AG04449 (cell line): ENCODE measurements at regions of chr4 and their contacts with region 1.

Region 1: GRCh38 chr4:42865572-42866189 is 26.8 kb upstream of the GRXCR1 start:
- DNase-seq: peak; percentile 2
- H3K4me3 ChIP-seq: no peak overlapping the region
- CTCF ChIP-seq: peak; percentile 55

Region 2: DNA sequence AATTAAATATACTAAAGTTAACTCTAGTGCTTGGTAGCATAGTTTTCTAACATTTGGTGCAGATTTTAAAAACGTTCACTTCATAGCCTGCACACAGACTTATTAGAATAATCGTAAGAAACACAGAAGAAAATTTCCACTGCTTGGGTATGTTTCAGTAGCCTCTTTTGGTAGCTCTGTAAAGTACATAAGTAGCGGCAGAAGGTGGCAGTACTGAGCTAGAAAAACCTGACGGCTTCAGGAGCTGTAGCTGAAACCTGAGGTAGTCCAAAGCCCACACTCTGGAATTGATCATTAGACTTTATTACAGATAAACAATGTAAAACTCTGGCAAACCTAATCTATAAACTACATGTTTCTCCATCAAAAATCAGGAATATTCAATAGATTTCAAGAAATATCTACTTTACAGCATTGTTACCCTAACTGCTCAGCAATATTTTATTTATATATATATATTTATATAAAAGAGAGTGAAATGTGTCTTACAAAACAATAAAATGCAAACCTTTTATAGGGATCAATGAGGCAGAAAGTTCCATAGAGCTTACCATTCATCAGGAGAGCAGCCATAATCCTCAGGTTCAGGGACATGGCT is 297.0 kb before region 1 on chr4:
- CTCF ChIA-PET with region 1: interaction called, 42 read pairs
- POLR2A ChIA-PET with region 1: no interaction called
- DNase-seq: peak; percentile 12
- H3K4me3 ChIP-seq: no peak overlapping the region
- CTCF ChIP-seq: peak; percentile 63

Region 3: GRCh38 chr4:42750091-42750490 is 115.6 kb before region 1 on chr4:
- CTCF ChIA-PET with region 1: no interaction called
- POLR2A ChIA-PET with region 1: no interaction called
- DNase-seq: no peak
- H3K4me3 ChIP-seq: no peak overlapping the region
- CTCF ChIP-seq: no peak

Region 4: DNA sequence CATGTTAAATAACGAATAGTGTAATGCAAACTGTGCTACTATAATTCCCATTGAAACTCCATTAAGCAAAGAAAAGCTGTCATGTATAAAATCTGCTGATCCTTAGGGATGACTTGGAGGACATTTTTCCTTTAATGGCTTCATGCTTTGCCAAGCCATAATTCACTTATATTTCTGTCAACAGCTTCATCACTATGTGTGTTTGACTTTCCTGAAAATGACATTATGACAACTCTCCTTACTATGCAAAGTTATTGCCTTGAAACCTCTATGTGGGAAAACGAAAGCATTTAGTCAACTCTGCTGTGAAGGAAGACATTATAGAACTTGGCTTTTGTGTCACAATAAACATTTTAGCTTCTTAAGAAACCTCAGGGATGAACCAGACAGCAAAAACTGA is 237.4 kb after region 1 on chr4:
- CTCF ChIA-PET with region 1: no interaction called
- POLR2A ChIA-PET with region 1: no interaction called
- DNase-seq: no peak
- H3K4me3 ChIP-seq: no peak overlapping the region
- CTCF ChIP-seq: no peak